ENCODE measurements at regions of chr5 and their contacts with region 1.

Region 1: DNA sequence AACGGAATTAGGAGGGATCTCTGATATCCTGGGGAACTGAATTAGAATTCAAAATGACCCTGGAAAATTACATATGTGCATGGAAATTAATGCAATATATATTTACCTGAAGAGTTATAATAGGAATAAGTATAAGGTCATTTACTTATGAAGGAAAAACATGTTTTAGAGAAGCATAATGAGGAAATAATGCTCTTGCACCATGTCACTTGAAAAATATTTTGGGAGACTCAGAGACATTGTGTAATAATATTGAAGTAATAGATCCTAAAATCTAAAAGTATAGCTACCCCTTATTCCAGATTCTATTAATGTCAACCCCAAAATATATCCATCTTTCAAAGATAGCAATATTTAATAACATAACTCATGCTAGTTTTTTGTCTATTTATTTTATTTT is 28.4 kb downstream of the SPZ1 start:
- DNase-seq: no peak
- ATAC-seq: no peak
- H3K4me3 ChIP-seq: no peak overlapping the region
- H3K27ac ChIP-seq: no peak overlapping the region
- H3K4me1 ChIP-seq: no peaks in the 10 kb centered on the region
- H3K27me3 ChIP-seq: no peaks in the 10 kb centered on the region
- CTCF ChIP-seq: no peak

Region 2: GRCh38 chr5:80417973-80418372 is 69.8 kb after region 1 on chr5:
- CTCF ChIA-PET with region 1: no interaction called
- POLR2A ChIA-PET with region 1: interaction called, 16 read pairs
- in situ Hi-C with region 1: no loop called
- intact Hi-C with region 1: no loop called
- DNase-seq: no peak
- ATAC-seq: no peak
- H3K4me3 ChIP-seq: no peak overlapping the region
- H3K27ac ChIP-seq: no peak overlapping the region
- H3K4me1 ChIP-seq: no peaks in the 10 kb centered on the region
- H3K27me3 ChIP-seq: no peaks in the 10 kb centered on the region
- CTCF ChIP-seq: no peak

Region 3: GRCh38 chr5:80736730-80737129 is 388.6 kb after region 1 on chr5:
- CTCF ChIA-PET with region 1: no interaction called
- POLR2A ChIA-PET with region 1: no interaction called
- in situ Hi-C with region 1: no loop called
- intact Hi-C with region 1: no loop called
- DNase-seq: no peak
- ATAC-seq: peak; percentile 62; the same call in 1 of the 2 replicates
- H3K4me3 ChIP-seq: no peak overlapping the region
- H3K27ac ChIP-seq: no peak overlapping the region
- H3K4me1 ChIP-seq: no peaks in the 10 kb centered on the region
- H3K27me3 ChIP-seq: no peaks in the 10 kb centered on the region
- CTCF ChIP-seq: no peak